Stomach (tissue), 19 donors: ENCODE measurements at regions of chr15 and their contacts with region 1.

Region 1: GRCh38 chr15:73633111-73633990 is at the start of gene NPTN:
- DNase-seq: peak; percentile 99 to 100
- H3K4me3 ChIP-seq: peak within 1 kb of the TSS; percentile 93 to 98 (median 94)
- H3K27ac ChIP-seq: peak within 1 kb of the TSS; percentile 88 to 100 (median 98)
- H3K4me1 ChIP-seq: peaks cover 26 to 55% (median 46%) of the 10 kb centered on the region in 4 donors
- H3K27me3 ChIP-seq: no peaks in the 10 kb centered on the region
- CTCF ChIP-seq: peak in 1 of 7 experiments; percentile 17
- EP300 ChIP-seq: no peak
- POLR2A ChIP-seq: peak in 2 of 4 donors; percentile 5 to 15
- total RNA-seq, gene NPTN: 58.8 to 228 (median 127) TPM

Region 2: GRCh38 chr15:73346735-73347312 is 286.5 kb before region 1 on chr15:
- intact Hi-C with region 1: no loop called
- DNase-seq: peak; percentile 74 to 90
- H3K4me3 ChIP-seq: no peak overlapping the region
- H3K27ac ChIP-seq: no peak overlapping the region
- H3K4me1 ChIP-seq: no peaks in the 10 kb centered on the region
- H3K27me3 ChIP-seq: peaks cover 0 to 29% (median 0%) of the 10 kb centered on the region in 3 donors
- CTCF ChIP-seq: no peak
- EP300 ChIP-seq: no peak
- POLR2A ChIP-seq: no peak

Region 3: DNA sequence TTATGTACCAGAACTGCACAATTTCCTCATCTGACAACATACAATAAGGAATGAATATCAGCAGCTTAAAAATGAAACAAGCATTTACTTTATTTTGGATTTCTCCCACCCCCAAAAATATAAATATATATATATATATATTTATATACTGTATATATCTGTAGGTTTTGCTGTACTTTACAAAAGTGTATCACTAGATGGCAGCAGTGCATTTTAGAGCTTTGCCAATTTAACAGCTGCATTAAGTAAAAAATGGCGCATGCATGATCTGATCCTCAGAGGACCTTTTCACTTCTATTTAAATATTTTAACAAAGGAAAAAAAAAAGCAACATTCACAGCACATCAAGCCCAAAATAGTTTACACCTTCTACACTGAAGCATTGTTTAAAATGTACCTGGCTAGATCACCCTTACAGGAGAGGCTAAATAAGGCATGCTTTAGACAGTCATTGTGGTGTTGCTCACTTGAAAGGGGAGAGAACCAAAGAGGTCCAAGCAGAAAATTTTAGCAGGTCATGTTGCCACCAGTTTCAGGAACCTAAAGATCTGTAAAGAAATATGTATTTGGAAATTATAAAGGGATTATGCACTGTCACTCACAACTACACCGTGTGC is 72.7 kb before region 1 on chr15:
- intact Hi-C with region 1: loop called (anchors 5 kb)
- DNase-seq: peak in 1 of 2 donors; percentile 92
- H3K4me3 ChIP-seq: no peak overlapping the region
- H3K27ac ChIP-seq: no peak overlapping the region
- H3K4me1 ChIP-seq: peaks cover 0 to 19% (median 6%) of the 10 kb centered on the region in 4 donors
- H3K27me3 ChIP-seq: no peaks in the 10 kb centered on the region
- CTCF ChIP-seq: peak in 3 of 7 experiments; percentile 24 to 47 (median 42)
- EP300 ChIP-seq: no peak
- POLR2A ChIP-seq: no peak

Region 4: GRCh38 chr15:73700041-73700842 is 66.9 kb after region 1 on chr15:
- intact Hi-C with region 1: loop called (anchors 10 kb)
- DNase-seq: peak; percentile 85 to 95
- H3K4me3 ChIP-seq: no peak overlapping the region
- H3K27ac ChIP-seq: no peak overlapping the region
- H3K4me1 ChIP-seq: peaks cover 15 to 29% (median 21%) of the 10 kb centered on the region in 4 donors
- H3K27me3 ChIP-seq: no peaks in the 10 kb centered on the region
- CTCF ChIP-seq: peak in 5 of 7 experiments; percentile 73 to 91 (median 90)
- EP300 ChIP-seq: no peak
- POLR2A ChIP-seq: no peak